ENCODE measurements at regions of chr6 and their contacts with region 1.

Region 1: GRCh38 chr6:25490018-25490801 is 161.8 kb upstream of the SCGN start:
- DNase-seq: peak; percentile 48
- H3K4me3 ChIP-seq: peak overlapping the region in 1 of 2 experiments; percentile 16; a peak in 1 of 4 replicates
- H3K27ac ChIP-seq: no peak overlapping the region; a peak in 1 of 4 replicates
- H3K4me1 ChIP-seq: peaks cover 0 to 11% of the 10 kb centered on the region in 2 experiments; a peak in 2 of 4 replicates
- H3K27me3 ChIP-seq: no peaks in the 10 kb centered on the region
- CTCF ChIP-seq: peak; percentile 86
- EP300 ChIP-seq: no peak
- RAD21 ChIP-seq: peak; percentile 93

Region 2: DNA sequence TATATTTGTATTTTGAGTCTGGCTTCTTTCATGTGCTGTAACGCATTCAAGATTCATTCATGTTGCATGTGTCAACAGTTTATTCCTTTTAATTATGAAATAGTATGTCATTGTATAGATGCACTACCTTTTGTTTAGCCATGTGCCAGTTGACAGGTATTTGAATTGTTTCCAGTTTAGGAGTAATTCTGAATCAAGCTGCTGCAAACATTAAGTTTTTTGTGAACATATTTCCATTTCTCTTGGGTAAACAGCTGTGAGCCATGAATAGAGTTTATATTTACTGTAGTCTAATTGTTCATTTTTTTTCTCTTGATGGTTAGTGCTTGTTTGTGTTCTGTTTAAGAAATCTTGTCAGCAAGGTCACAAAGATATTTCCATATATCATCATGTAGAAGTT is 412.1 kb before region 1 on chr6:
- CTCF ChIA-PET with region 1: no interaction called
- POLR2A ChIA-PET with region 1: no interaction called
- DNase-seq: no peak
- H3K4me3 ChIP-seq: no peak overlapping the region
- H3K27ac ChIP-seq: no peak overlapping the region
- H3K4me1 ChIP-seq: no peaks in the 10 kb centered on the region
- H3K27me3 ChIP-seq: no peaks in the 10 kb centered on the region
- CTCF ChIP-seq: no peak
- EP300 ChIP-seq: no peak
- RAD21 ChIP-seq: no peak

Region 3: DNA sequence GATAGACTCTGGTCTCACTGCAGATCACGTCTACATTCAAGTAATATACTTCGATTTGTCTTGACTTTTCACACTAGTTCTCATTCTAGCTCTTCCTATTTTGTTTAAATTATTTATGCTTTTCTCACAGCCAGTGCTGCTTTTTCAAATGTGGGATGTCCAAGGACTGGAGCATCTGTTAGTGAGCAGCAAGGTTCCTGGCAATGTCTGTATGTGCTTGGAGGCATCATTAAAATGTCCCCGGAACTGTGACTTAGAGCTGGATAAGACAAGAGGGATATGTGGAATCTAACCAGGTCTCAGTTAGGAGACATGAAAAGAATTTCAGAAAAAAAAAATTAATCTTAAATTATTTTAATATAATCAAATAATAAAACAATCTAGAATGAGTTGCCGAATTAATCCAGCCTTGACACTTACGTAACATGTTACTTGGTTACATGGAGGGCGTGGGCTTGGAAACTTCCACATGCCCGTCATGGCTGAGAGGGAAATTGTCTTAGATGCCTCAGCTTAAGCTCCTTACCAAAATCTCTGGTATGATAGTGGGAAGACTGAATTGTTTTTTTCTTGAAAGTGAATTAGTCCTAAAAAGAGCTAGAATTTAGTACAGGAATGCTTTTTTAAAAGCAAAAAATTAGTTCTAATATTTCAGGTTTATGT is 232.4 kb before region 1 on chr6:
- CTCF ChIA-PET with region 1: interaction called, 49 read pairs
- POLR2A ChIA-PET with region 1: no interaction called
- DNase-seq: no peak
- H3K4me3 ChIP-seq: no peak overlapping the region
- H3K27ac ChIP-seq: no peak overlapping the region; a peak in 1 of 4 replicates
- H3K4me1 ChIP-seq: peaks cover 2 to 3% of the 10 kb centered on the region in 2 experiments; a peak in 1 of 4 replicates
- H3K27me3 ChIP-seq: no peaks in the 10 kb centered on the region
- CTCF ChIP-seq: no peak
- EP300 ChIP-seq: no peak
- RAD21 ChIP-seq: no peak

Region 4: DNA sequence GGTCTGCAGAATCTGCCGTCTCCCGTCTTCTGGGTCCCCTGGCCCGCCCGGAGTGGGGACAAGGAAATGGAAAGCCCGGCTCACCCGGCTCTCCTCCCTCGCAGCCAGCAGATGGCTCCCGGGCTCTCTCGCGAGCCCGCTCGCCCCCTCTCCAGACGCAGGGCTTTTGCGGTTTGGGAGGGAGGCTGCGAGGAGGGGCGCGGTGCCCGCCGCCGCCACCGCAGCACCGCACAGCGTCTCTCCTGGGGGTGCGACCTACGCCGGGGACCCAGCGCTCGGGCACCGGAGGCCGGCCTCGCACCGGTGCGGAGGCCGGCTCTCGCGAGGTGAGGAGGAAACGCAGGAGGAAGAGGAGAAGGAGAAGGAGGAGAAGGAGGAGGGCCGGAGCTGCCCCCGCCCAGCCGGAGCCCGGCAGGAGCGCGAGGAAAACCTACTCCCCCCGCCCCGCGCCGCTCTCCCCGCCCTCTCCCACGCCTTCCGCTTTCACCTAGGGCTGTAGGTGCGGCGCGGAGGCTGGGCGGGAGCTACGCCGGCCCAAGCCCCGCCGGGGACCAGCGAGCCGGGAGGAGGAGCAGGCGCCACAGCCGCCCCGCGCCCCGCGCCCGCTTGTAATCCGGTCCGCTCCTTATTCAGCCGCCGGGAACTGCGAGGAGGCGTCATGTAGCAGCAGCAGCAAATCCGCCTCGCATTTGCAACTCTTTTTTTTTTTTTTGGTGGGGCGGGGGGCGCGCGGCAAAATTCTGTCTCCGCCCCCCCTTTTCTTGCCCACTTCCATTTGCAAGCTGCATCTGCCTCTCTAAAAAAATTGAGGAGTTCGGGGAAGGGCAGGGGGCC is 211.1 kb before region 1 on chr6 and contains the start of gene CARMIL1:
- CTCF ChIA-PET with region 1: interaction called, 151 read pairs
- POLR2A ChIA-PET with region 1: interaction called, 12 read pairs
- DNase-seq: peak; percentile 94
- H3K4me3 ChIP-seq: peak within 1 kb of the TSS; percentile 82 to 95
- H3K27ac ChIP-seq: peak within 1 kb of the TSS; percentile 41 to 60; a peak in 2 of 4 replicates
- H3K4me1 ChIP-seq: peaks cover 0 to 14% of the 10 kb centered on the region in 2 experiments; a peak in 2 of 4 replicates
- H3K27me3 ChIP-seq: no peaks in the 10 kb centered on the region
- CTCF ChIP-seq: peak; percentile 73
- EP300 ChIP-seq: no peak; a peak in 1 of 4 replicates
- RAD21 ChIP-seq: peak; percentile 83
- polyA plus RNA-seq, gene CARMIL1: 1.7 TPM in 2 replicates

Region 5: GRCh38 chr6:25458485-25458884 is 31.7 kb before region 1 on chr6:
- CTCF ChIA-PET with region 1: no interaction called
- POLR2A ChIA-PET with region 1: no interaction called
- DNase-seq: no peak
- H3K4me3 ChIP-seq: no peak overlapping the region
- H3K27ac ChIP-seq: 0 out of 4 replicates have a peak overlapping the region, but pooled peaks of 1 of the 2 experiments have one; percentile 3
- H3K4me1 ChIP-seq: peaks cover 0 to 5% of the 10 kb centered on the region in 2 experiments; a peak in 2 of 4 replicates
- H3K27me3 ChIP-seq: no peaks in the 10 kb centered on the region
- CTCF ChIP-seq: no peak
- EP300 ChIP-seq: no peak
- RAD21 ChIP-seq: no peak

Region 6: GRCh38 chr6:25504661-25505060 is 14.5 kb after region 1 on chr6:
- CTCF ChIA-PET with region 1: interaction called, 16 read pairs
- POLR2A ChIA-PET with region 1: no interaction called
- DNase-seq: no peak
- H3K4me3 ChIP-seq: no peak overlapping the region
- H3K27ac ChIP-seq: no peak overlapping the region
- H3K4me1 ChIP-seq: peaks cover 0 to 2% of the 10 kb centered on the region in 2 experiments; a peak in 3 of 4 replicates
- H3K27me3 ChIP-seq: no peaks in the 10 kb centered on the region
- CTCF ChIP-seq: no peak
- EP300 ChIP-seq: no peak
- RAD21 ChIP-seq: no peak

Region 7: GRCh38 chr6:25590986-25591385 is 100.8 kb after region 1 on chr6:
- CTCF ChIA-PET with region 1: interaction called, 10 read pairs
- POLR2A ChIA-PET with region 1: no interaction called
- DNase-seq: peak; percentile 25
- H3K4me3 ChIP-seq: no peak overlapping the region
- H3K27ac ChIP-seq: peak overlapping the region in 1 of 2 experiments; percentile 60; a peak in 2 of 4 replicates
- H3K4me1 ChIP-seq: peaks cover 0 to 10% of the 10 kb centered on the region in 2 experiments; a peak in 2 of 4 replicates
- H3K27me3 ChIP-seq: no peaks in the 10 kb centered on the region
- CTCF ChIP-seq: no peak
- EP300 ChIP-seq: no peak
- RAD21 ChIP-seq: no peak